Activated CD8-positive, alpha-beta memory T cell treated with anti-CD3 and anti-CD28 coated beads, Interleukin-2, amount 10 ng/mL, durations not matched to agents 7 days and 5 days (primary cell): ENCODE measurements at regions of chr6 and their contacts with region 1.

Region 1: GRCh38 chr6:151440930-151441329 is 11.0 kb downstream of the RMND1 start:
- DNase-seq: no peak
- ATAC-seq: no peak
- H3K4me3 Mint-ChIP-seq: no peak overlapping the region
- H3K27ac Mint-ChIP-seq: peak overlapping the region; percentile 66
- H3K4me1 Mint-ChIP-seq: peaks cover 16% of the 10 kb centered on the region
- H3K27me3 Mint-ChIP-seq: no peaks in the 10 kb centered on the region

Region 2: DNA sequence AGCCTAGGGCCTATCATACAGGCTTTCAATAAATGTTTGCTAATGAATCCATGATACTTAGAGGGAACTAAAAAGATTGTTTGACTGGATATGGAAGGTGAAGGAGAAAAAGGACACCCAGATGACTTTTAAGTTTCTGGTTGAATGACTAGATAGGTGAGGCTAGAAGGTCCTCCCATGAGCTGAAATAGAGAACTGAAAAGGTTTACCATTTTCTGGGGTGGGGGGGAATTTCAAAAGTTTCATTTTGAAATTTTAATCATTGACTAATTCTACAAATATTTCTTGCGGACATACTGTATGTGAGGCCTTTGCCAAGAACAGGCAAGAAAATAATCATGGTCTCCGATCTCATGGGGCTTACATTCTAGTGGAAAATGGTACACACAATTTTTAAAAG is 31.7 kb before region 1 on chr6:
- CTCF ChIA-PET with region 1: interaction called, 11 read pairs
- DNase-seq: no peak
- ATAC-seq: no peak
- H3K4me3 Mint-ChIP-seq: no peak overlapping the region
- H3K27ac Mint-ChIP-seq: peak overlapping the region; percentile 2
- H3K4me1 Mint-ChIP-seq: peaks cover 10% of the 10 kb centered on the region
- H3K27me3 Mint-ChIP-seq: no peaks in the 10 kb centered on the region

Region 3: DNA sequence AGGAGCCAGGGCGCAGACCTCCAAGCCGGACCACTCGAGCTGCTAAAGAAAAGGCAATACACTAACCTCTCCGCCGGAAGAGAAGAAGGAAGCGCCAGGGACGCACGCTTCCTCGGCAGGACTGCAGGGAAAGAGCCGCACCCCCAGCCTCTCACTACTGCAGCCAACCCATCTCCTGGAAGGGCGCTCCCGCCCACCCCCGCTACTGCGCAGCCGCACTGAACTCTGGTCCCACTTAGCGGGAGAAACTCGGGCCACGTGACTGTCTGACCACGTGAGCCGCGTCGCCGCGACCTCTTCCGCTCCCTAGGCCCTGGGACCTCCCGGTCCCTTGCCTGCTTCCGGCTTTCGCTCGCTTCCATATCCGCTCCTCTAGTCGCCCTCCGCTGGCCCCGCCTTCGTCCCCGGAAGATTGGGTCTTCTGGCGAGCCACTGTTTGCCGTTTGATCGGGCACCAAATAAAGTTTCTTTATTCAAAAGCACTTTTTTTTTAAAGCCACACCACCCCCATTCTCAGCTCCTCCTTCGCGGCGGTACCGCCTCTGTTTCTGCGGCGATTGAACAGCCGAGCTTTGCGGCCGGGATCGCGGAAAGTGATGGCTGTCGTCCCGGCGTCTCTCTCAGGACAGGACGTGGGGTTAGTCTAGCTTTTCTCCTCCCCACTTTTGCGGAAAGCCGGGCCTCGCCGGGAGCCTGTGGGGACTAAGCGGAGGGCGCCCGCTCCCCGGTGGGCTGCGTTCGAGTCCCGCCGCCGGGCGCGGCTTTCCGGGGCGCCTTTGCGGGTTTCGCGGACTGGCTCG is 11.2 kb after region 1 on chr6 and contains the start of gene RMND1:
- CTCF ChIA-PET with region 1: interaction called, 11 read pairs
- DNase-seq: peak; percentile 100
- ATAC-seq: peak; percentile 98
- H3K4me3 Mint-ChIP-seq: peak within 1 kb of the TSS; percentile 95
- H3K27ac Mint-ChIP-seq: peak within 1 kb of the TSS; percentile 93
- H3K4me1 Mint-ChIP-seq: peaks cover 26% of the 10 kb centered on the region
- H3K27me3 Mint-ChIP-seq: no peaks in the 10 kb centered on the region
- total RNA-seq, gene RMND1: 19.9 to 21.8 TPM

Region 4: DNA sequence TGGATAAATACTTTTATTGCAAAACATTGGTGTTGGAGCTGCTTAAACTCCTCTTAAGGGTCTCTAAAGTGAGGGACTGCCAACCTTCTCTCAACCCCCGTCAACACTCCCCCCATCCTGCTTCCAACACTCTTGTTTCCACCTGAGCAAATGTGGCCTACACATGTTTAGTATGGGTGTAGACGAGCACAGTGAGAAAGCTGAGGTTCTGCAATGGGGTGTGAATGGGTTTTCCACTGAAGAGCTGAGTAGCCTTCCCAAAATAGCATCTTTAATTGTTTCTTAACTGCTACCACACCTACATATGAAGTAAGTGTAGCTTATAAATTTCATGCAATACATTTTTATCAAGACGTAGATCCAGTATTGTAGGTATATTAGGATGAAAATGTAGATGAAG is 32.4 kb after region 1 on chr6:
- CTCF ChIA-PET with region 1: interaction called, 15 read pairs
- DNase-seq: no peak
- ATAC-seq: no peak
- H3K4me3 Mint-ChIP-seq: no peak overlapping the region
- H3K27ac Mint-ChIP-seq: no peak overlapping the region
- H3K4me1 Mint-ChIP-seq: peaks cover 9% of the 10 kb centered on the region
- H3K27me3 Mint-ChIP-seq: no peaks in the 10 kb centered on the region